ENCODE measurements at regions of chr4 and their contacts with region 1.

Region 1: DNA sequence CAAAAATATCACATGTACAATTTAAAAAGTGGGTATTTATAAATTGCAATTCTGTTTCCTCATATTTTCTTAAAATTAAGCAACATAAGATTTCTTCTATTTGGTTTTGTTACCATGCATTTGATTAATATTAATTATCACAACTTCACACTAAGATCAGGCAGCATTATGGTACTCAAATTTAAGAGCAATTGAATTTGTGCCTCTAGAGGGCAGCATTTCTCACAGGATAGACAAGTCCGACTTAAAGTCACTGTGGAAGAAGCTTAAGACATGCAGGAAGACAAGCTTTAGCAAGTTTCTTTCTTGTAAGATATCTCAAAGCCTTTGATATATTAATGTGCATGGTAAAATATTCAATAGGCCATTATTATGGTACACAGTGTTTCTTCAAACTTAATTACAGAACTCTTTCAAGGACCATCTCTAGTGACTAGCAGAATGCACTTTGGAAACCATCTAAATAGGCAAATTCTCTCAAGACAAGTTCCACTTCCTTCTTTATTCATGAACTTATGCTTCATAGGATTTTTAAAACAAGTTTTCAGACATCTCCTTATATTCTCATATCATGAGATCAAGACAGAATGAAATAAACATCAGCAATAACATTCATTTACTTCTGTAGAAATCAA is 35.0 kb downstream of the FBXW7 start:
- DNase-seq: peak; percentile 65
- ATAC-seq: peak; percentile 59
- H3K4me3 ChIP-seq: no peak overlapping the region
- H3K27ac ChIP-seq: no peak overlapping the region
- H3K4me1 ChIP-seq: peaks cover 28% of the 10 kb centered on the region
- H3K27me3 ChIP-seq: no peaks in the 10 kb centered on the region
- CTCF ChIP-seq: peak; percentile 72
- EP300 ChIP-seq: no peak
- POLR2A ChIP-seq: no peak
- RAD21 ChIP-seq: no peak

Region 2: GRCh38 chr4:152460488-152460887 is 40.4 kb before region 1 on chr4:
- CTCF ChIA-PET with region 1: no interaction called
- POLR2A ChIA-PET with region 1: no interaction called
- in situ Hi-C with region 1: no loop called
- intact Hi-C with region 1: loop called (anchors 5 kb)
- DNase-seq: peak; percentile 25
- ATAC-seq: no peak
- H3K4me3 ChIP-seq: no peak overlapping the region
- H3K27ac ChIP-seq: no peak overlapping the region
- H3K4me1 ChIP-seq: peaks cover 53% of the 10 kb centered on the region
- H3K27me3 ChIP-seq: no peaks in the 10 kb centered on the region
- CTCF ChIP-seq: peak; percentile 44
- EP300 ChIP-seq: peak in 1 of 2 experiments; percentile 25; a peak in 1 of 4 replicates
- POLR2A ChIP-seq: no peak
- RAD21 ChIP-seq: no peak

Region 3: DNA sequence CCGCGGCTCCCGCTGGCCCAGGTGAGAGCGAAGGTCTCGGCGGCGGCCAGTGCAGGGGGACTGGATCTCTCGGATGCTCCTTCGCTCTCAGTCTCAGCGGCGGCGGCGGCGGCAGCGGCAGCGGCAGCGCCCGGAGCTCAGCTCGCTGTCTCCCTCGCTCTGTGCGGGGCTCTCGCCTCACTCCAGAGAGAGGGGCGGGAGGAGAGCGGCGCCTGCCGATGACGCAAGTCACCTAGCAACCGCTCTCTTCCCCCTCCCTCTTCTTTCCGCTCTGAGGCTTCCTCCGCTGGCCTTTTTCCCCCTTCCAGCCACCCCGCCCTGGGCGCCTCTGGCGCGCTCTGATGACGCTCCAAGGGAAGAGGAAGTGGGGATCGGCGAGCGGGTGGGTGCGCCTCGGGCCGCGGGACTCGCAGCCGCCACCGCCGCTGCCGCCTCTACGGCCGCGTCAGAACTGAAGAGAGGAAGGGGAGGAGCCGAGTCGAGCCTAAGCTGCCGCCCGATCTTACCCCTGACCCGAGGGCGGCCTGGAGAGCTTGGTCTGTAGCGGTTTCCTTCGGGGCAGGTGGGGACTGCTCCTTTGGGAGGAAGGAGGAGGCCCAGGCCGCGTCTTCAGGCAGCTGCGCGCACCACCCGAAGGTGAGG is 35.1 kb after region 1 on chr4 and contains the start of gene FBXW7:
- CTCF ChIA-PET with region 1: no interaction called
- POLR2A ChIA-PET with region 1: no interaction called
- in situ Hi-C with region 1: no loop called
- intact Hi-C with region 1: loop called (anchors 5 kb)
- DNase-seq: peak; percentile 98
- ATAC-seq: peak; percentile 93
- H3K4me3 ChIP-seq: peak within 1 kb of the TSS; percentile 82 to 96 (median 91)
- H3K27ac ChIP-seq: peak within 1 kb of the TSS; percentile 97
- H3K4me1 ChIP-seq: peaks cover 46% of the 10 kb centered on the region
- H3K27me3 ChIP-seq: no peaks in the 10 kb centered on the region; a peak in 2 of 5 replicates
- CTCF ChIP-seq: no peak; the same call in none of the 2 replicates
- EP300 ChIP-seq: peak in 1 of 2 experiments; percentile 12; a peak in 2 of 4 replicates
- POLR2A ChIP-seq: peak; percentile 75 to 76
- RAD21 ChIP-seq: peak; percentile 41; the same call in 1 of the 2 replicates
- total RNA-seq, gene FBXW7: 21.7 and 40.9 TPM in 2 replicates

Region 4: GRCh38 chr4:152640058-152640833 is 139.3 kb after region 1 on chr4:
- CTCF ChIA-PET with region 1: interaction called, 15 read pairs
- POLR2A ChIA-PET with region 1: no interaction called
- in situ Hi-C with region 1: no loop called
- intact Hi-C with region 1: loop called (anchors 1 kb)
- DNase-seq: no peak
- ATAC-seq: peak; percentile 67
- H3K4me3 ChIP-seq: no peak overlapping the region
- H3K27ac ChIP-seq: no peak overlapping the region
- H3K4me1 ChIP-seq: peaks cover 40% of the 10 kb centered on the region
- H3K27me3 ChIP-seq: no peaks in the 10 kb centered on the region
- CTCF ChIP-seq: peak; percentile 54
- EP300 ChIP-seq: no peak; a peak in 1 of 4 replicates
- POLR2A ChIP-seq: no peak
- RAD21 ChIP-seq: peak; percentile 44; the same call in 1 of the 2 replicates

Region 5: DNA sequence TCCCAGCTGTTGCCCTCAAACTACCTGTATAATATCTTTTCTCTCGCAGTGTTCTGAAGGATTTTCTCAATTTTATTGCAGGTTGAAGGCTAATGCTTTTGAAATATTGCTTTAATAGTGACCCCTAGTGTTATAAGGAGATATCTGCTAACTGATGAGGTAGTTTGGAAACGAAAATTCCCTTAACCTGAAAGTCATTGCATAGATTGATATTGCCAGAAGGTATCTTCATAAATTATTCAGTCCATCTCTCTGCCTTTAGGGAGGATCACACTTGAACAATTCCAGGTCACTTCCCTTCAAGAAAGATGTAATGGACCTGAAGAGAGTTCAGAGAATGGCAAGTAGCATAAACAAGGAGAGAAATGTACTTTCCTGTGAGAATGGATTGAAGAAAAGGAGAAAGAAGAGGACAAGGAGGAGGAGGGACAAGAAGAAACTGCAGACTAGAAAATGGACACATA is 234.5 kb after region 1 on chr4:
- CTCF ChIA-PET with region 1: interaction called, 8 read pairs
- POLR2A ChIA-PET with region 1: no interaction called
- in situ Hi-C with region 1: no loop called
- intact Hi-C with region 1: loop called (anchors 2 kb)
- DNase-seq: no peak
- ATAC-seq: peak; percentile 42; the same call in 2 of the 3 replicates
- H3K4me3 ChIP-seq: no peak overlapping the region
- H3K27ac ChIP-seq: no peak overlapping the region
- H3K4me1 ChIP-seq: no peaks in the 10 kb centered on the region
- H3K27me3 ChIP-seq: peaks cover 0 to 9% of the 10 kb centered on the region in 2 experiments; a peak in 1 of 5 replicates
- CTCF ChIP-seq: peak; percentile 57
- EP300 ChIP-seq: no peak
- POLR2A ChIP-seq: no peak
- RAD21 ChIP-seq: peak; percentile 53; the same call in 1 of the 2 replicates

Measured in HepG2 (cell line).